CD4-positive, alpha-beta memory T cell (primary cell): ENCODE measurements at regions of chr2 and their contacts with region 1.

Region 1: GRCh38 chr2:28356095-28356911 is 36.4 kb upstream of the FOSL2 start:
- DNase-seq: peak in 3 of 5 donors; percentile 32 to 38 (median 35)
- H3K4me3 ChIP-seq: no peak overlapping the region
- H3K4me3 Mint-ChIP-seq: no peak overlapping the region
- H3K27ac ChIP-seq: no peak overlapping the region
- H3K27ac Mint-ChIP-seq: peak overlapping the region in 6 of 7 donors; percentile 13 to 91 (median 61)
- H3K4me1 ChIP-seq: peaks cover 47% of the 10 kb centered on the region
- H3K4me1 Mint-ChIP-seq: peaks cover 22 to 53% (median 39%) of the 10 kb centered on the region in 4 donors
- H3K27me3 ChIP-seq: no peaks in the 10 kb centered on the region
- H3K27me3 Mint-ChIP-seq: peaks cover 0 to 3% of the 10 kb centered on the region in 2 donors

Region 2: DNA sequence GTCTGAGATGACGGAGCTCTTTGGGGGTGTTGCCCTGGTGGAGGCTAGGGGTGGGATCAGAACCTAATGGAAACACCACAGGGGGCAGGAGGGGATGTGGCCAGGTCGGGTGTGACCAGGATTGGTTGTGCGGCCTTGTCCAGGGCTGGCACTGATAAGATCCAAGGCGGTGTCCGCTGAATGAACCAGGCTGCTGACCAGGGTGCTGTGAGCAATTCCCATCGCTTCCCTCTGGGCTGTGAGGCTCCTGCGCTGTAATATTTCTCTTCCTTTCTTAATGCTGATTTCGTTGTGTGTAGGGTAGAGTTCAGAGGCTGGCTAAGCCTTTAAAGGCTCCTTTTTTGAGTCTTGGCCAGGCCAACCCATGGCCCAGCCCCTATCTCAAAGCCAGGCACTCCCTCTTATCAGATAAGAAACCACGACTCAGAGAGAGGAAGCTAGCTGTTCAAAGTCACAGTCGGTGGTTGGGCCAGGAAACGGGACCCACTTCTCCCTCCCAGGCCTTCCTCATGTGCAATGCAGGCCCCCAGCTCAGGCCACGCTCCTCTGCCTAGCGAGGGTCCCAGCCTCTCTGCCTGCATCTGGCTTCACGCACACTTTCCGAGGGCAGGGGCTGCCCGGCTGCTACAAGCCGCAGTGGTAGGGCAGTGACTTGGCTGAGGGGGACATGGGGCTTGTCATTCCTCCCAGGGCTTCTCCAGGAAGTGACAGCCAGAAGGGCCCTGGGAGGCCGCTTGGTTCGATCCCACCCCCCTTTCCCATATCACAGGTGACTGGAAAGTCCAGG is 10.4 kb after region 1 on chr2:
- CTCF ChIA-PET with region 1: interaction called, 3 read pairs
- POLR2A ChIA-PET with region 1: interaction called, 12 read pairs
- intact Hi-C with region 1: no loop called
- DNase-seq: peak; percentile 76 to 84 (median 78)
- H3K4me3 ChIP-seq: peak overlapping the region; percentile 34 to 35
- H3K4me3 Mint-ChIP-seq: peak overlapping the region; percentile 61 to 90 (median 81)
- H3K27ac ChIP-seq: peak overlapping the region; percentile 10
- H3K27ac Mint-ChIP-seq: peak overlapping the region; percentile 79 to 94 (median 93)
- H3K4me1 ChIP-seq: peaks cover 71% of the 10 kb centered on the region
- H3K4me1 Mint-ChIP-seq: peaks cover 40 to 76% (median 56%) of the 10 kb centered on the region in 4 donors
- H3K27me3 ChIP-seq: no peaks in the 10 kb centered on the region
- H3K27me3 Mint-ChIP-seq: no peaks in the 10 kb centered on the region

Region 3: DNA sequence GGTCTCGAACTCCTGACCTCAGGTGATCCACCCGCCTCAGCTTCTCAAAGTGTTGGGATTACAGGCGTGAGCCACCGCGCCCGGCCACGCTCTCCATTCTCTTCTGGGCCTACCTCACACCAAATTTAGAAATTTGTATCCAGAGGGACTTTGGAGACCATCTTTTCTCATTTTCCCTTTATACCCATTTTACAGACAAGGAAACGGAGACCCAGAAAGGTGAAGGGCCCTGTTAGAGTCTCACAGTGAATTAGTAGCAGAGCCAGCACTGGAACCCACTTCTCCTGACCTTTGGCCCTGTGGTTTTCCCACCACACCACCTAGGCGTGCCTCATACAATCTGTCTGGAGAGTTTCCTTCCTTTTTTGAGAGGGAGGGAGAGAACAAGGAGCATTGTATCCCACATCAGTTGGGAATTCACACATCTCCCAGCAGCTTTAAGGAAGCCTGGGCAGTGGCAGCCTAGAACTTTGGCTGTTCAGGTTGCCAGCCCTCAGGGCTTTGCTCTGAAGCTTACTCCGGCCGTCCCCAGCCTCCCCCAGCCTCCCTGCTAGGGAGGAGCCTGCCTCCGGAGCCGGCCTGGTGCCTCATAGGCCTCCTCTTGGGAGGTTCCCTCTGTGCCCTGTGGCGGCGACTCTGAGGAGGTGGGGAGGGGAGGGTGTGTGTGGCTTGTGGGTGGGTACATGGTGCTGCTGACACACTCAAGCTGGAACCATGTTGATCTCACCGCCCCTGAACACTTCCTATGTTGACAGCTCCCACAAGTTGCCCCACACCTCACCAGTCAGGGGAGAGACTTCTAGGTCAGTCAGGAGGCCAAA is 50.2 kb after region 1 on chr2:
- CTCF ChIA-PET with region 1: interaction called, 3 read pairs
- POLR2A ChIA-PET with region 1: interaction called, 6 read pairs
- intact Hi-C with region 1: loop called (anchors 2 kb)
- DNase-seq: peak; percentile 70 to 90 (median 75)
- H3K4me3 ChIP-seq: no peak overlapping the region
- H3K4me3 Mint-ChIP-seq: peak overlapping the region; percentile 2 to 73 (median 54)
- H3K27ac ChIP-seq: peak overlapping the region; percentile 34
- H3K27ac Mint-ChIP-seq: peak overlapping the region; percentile 87 to 100 (median 96)
- H3K4me1 ChIP-seq: peaks cover 78% of the 10 kb centered on the region
- H3K4me1 Mint-ChIP-seq: peaks cover 53 to 91% (median 76%) of the 10 kb centered on the region in 4 donors
- H3K27me3 ChIP-seq: no peaks in the 10 kb centered on the region
- H3K27me3 Mint-ChIP-seq: no peaks in the 10 kb centered on the region